Heart right ventricle (tissue), 16 donors: ENCODE measurements at regions of chr1 and their contacts with region 1.

Region 1: DNA sequence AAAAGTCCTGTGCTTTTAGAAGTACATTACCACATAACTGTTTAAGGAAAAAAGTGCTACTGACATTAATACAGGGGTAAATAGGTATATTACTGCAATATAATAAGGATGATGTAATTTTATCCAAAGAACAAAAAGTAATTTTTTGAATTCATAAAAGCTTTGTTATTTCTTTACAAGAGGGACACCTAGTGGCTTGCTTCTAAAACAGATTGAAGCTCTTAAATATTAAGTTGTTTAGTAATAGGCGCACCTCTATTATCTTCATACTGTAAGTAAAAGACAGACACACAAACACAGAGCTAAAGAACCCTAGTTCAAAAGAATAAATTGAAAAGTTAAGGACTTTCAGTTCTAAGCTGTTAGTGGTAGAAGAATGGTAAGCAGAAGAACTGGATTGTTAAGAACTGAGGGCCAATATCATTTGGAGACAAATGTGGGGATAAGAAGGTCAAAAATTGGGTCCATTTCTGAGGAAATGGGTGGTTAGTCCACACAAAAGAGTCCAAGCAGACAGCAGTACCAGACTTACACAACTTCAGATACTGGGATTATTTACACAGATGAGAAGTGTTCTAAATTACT is 15.4 kb downstream of the ZNHIT6 start:
- DNase-seq: no peak
- ATAC-seq: peak in 4 of 8 donors; percentile 27 to 50 (median 40)
- H3K4me3 ChIP-seq: no peak overlapping the region
- H3K27ac ChIP-seq: peak overlapping the region in 1 of 10 donors; percentile 5
- H3K4me1 ChIP-seq: peaks cover 0 to 16% (median 2%) of the 10 kb centered on the region in 9 donors
- H3K27me3 ChIP-seq: no peaks in the 10 kb centered on the region
- CTCF ChIP-seq: peak; percentile 18 to 72 (median 52)

Region 2: DNA sequence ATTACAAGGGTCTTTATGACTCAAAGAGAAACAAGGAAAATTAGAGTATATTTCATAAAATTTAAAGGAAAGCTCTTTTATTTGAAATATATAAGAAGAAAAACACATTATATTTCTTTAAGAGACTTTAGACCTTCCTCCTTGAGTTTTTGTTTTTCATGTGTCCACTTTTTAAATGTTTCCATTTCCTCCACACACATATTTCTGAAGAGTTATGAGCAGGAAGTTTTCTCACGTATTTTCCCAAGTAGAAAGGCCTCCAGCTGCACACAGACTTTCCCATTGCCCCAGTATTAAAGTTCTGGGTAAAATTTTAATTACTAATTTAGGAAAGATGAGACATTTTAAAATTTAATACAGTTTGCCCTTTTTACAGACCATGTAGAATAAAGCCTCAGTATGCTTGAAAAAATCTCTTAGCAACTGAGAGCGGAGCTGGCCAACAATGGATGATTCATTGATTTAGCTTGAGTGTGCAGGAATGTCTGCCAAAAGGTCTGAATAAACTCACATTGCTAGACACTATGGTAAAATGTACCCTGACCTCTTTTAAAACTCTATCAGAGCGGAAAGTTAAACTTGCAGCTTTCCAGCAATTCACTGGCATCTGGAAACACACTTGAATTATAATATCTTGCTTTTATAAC is 285.8 kb before region 1 on chr1:
- intact Hi-C with region 1: loop called in 2 of 10 experiments (anchors 10 kb)
- DNase-seq: peak in 1 of 2 donors; percentile 46
- ATAC-seq: peak; percentile 75 to 97 (median 85)
- H3K4me3 ChIP-seq: no peak overlapping the region
- H3K27ac ChIP-seq: peak overlapping the region in 7 of 10 donors; percentile 41 to 79 (median 56)
- H3K4me1 ChIP-seq: peaks cover 0 to 41% (median 13%) of the 10 kb centered on the region in 9 donors
- H3K27me3 ChIP-seq: no peaks in the 10 kb centered on the region
- CTCF ChIP-seq: no peak

Region 3: GRCh38 chr1:85494904-85495266 is 197.9 kb before region 1 on chr1:
- intact Hi-C with region 1: loop called in 2 of 10 experiments (anchors 10 kb)
- DNase-seq: peak in 1 of 2 donors; percentile 7
- ATAC-seq: peak in 2 of 8 donors; percentile 53 to 55
- H3K4me3 ChIP-seq: no peak overlapping the region
- H3K27ac ChIP-seq: no peak overlapping the region
- H3K4me1 ChIP-seq: no peaks in the 10 kb centered on the region
- H3K27me3 ChIP-seq: no peaks in the 10 kb centered on the region
- CTCF ChIP-seq: peak in 7 of 9 donors; percentile 18 to 54 (median 47)

Region 4: DNA sequence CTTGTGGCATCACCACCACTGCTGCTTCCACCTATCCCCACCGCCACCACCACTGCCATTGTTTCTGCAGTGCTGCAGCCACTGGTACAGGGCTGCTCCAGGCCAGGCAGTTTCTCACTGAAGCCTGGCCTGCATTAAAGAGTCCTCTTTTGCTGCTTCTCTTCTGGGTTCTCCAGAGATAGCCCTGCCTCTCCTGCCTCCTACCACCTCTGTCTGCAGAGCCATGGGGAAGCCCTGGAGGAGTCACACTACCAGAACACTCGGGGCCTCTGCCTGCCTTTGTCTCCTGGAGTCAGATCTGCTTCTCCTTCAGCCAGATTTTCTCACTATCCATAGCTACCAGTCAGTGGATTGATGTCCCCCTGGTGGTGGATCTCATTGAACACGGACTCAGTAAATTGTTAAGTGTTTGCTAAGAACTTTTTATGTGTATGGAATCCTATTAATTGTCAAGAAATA is 190.2 kb before region 1 on chr1:
- intact Hi-C with region 1: loop called in 2 of 10 experiments (anchors 10 kb)
- DNase-seq: peak in 1 of 2 donors; percentile 68
- ATAC-seq: peak; percentile 62 to 94 (median 88)
- H3K4me3 ChIP-seq: no peak overlapping the region
- H3K27ac ChIP-seq: no peak overlapping the region
- H3K4me1 ChIP-seq: peaks cover 0 to 14% (median 0%) of the 10 kb centered on the region in 9 donors
- H3K27me3 ChIP-seq: no peaks in the 10 kb centered on the region
- CTCF ChIP-seq: peak; percentile 22 to 72 (median 58)

Region 5: DNA sequence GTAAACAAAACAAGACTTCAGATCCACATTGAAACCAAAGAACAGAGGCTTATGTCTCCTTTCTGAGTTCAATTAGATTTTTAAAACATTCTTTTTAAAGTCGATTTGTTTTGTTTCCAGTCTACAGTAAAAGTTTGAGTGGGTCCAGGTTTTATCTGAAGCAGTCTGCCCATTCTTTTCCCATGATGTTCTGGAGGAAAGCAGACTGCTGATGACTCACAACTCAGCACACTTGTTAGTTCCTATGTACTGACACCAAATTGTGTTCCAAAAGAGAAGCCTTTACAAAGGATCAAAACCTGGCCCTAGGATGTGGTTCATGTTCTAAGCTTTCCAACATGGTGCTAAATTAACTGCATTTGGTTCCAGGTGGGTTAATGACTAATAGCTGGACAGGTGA is 123.7 kb before region 1 on chr1:
- intact Hi-C with region 1: no loop called
- DNase-seq: no peak
- ATAC-seq: peak in 7 of 8 donors; percentile 35 to 73 (median 65)
- H3K4me3 ChIP-seq: no peak overlapping the region
- H3K27ac ChIP-seq: peak overlapping the region in 6 of 10 donors; percentile 16 to 74 (median 54)
- H3K4me1 ChIP-seq: peaks cover 0 to 32% (median 7%) of the 10 kb centered on the region in 9 donors
- H3K27me3 ChIP-seq: no peaks in the 10 kb centered on the region
- CTCF ChIP-seq: no peak

Region 6: DNA sequence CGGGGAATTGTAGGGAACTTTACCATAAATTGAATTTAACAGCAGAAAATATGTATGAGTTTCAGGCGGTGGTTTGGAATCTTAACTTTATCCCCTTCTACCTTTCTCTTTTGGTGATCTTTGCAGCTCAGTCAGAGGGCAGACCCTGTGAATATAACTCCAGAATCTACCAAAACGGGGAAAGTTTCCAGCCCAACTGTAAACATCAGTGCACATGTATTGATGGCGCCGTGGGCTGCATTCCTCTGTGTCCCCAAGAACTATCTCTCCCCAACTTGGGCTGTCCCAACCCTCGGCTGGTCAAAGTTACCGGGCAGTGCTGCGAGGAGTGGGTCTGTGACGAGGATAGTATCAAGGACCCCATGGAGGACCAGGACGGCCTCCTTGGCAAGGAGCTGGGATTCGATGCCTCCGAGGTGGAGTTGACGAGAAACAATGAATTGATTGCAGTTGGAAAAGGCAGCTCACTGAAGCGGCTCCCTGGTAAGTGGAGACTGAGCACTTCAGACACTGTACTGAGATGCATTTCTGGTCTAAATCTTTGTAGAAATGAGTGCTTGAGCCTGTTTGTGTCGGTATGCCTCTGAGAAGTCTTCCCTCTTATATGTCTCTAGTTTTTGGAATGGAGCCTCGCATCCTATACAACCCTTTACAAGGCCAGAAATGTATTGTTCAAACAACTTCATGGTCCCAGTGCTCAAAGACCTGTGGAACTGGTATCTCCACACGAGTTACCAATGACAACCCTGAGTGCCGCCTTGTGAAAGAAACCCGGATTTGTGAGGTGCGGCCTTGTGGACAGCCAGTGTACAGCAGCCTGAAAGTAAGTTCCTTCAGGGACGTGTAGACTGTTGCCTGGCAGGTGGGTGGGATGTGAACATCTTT is 110.8 kb before region 1 on chr1:
- intact Hi-C with region 1: loop called in 8 of 10 experiments (anchors 5 to 10 kb)
- DNase-seq: peak in 1 of 2 donors; percentile 38
- ATAC-seq: peak in 4 of 8 donors; percentile 12 to 24 (median 20)
- H3K4me3 ChIP-seq: peak overlapping the region; percentile 63 to 93 (median 78)
- H3K27ac ChIP-seq: peak overlapping the region; percentile 71 to 100 (median 98)
- H3K4me1 ChIP-seq: peaks cover 7 to 61% (median 51%) of the 10 kb centered on the region in 9 donors
- H3K27me3 ChIP-seq: peaks cover 0 to 53% (median 0%) of the 10 kb centered on the region in 7 donors
- CTCF ChIP-seq: peak in 7 of 9 donors; percentile 10 to 47 (median 32)